ENCODE measurements at regions of chr15 and their contacts with region 1.

Region 1: GRCh38 chr15:74615508-74616365 is at the start of gene CLK3:
- DNase-seq: peak; percentile 96 to 99 (median 98)
- ATAC-seq: peak; percentile 89 to 92 (median 90)
- H3K4me3 ChIP-seq: peak within 1 kb of the TSS; percentile 84 to 98 (median 94)
- H3K27ac ChIP-seq: peak within 1 kb of the TSS; percentile 89 to 99 (median 97)
- H3K4me1 ChIP-seq: peaks cover 12 to 15% (median 13%) of the 10 kb centered on the region in 3 donors
- H3K27me3 ChIP-seq: no peaks in the 10 kb centered on the region
- CTCF ChIP-seq: no peak
- total RNA-seq, gene CLK3: 23.1 to 42.2 (median 28.7) TPM

Region 2: DNA sequence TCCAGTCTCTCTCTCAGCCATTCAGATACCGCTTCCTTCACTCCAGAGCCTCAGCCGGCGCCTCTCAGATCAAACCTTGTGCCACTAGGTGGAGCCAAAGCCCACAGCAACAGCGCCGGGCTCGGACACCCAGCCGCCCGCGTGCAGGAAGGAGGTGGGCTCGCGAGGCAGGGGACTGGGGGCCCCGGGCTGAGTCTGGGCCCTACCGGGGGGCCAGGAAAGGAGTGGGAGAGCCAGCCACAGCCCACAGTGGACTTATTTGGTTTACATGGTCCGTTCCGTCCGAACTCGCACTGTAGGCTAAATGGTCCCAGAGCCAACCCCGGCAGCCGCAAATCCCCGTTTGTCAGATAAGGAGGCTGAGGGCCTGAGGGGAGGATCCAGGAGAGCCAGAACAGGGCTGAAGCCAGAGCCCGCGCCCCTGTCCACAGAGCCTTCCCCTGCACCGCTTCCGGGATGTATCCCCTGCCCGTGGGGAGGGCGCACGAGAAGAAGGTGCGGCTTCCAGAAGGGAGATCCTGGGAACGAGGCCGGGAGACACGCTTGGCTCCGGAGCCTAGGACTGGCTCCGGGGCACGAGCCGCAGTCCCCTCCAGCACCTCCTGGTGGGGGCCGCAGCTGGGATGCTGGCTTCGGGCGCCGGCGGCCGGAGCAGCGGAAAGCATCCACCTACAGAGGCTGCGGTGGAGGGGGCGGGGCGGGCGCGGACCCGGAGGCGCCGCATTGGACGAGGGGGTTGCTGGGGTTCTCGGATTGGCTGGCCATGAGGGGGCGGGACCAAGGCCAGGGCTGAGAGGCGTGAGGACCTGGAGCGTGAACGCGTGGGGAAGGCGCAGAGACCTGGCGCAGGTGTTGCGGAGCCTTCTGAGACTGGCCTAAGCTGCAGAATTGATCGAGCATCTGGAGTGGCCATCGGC is 241.7 kb before region 1 on chr15:
- intact Hi-C with region 1: loop called in 1 of 3 experiments (anchors 10 kb)
- DNase-seq: peak; percentile 90 to 96 (median 94)
- ATAC-seq: peak; percentile 97 to 100 (median 99)
- H3K4me3 ChIP-seq: peak overlapping the region; percentile 49 to 65 (median 60)
- H3K27ac ChIP-seq: no peak overlapping the region
- H3K4me1 ChIP-seq: peaks cover 0 to 8% (median 0%) of the 10 kb centered on the region in 3 donors
- H3K27me3 ChIP-seq: no peaks in the 10 kb centered on the region
- CTCF ChIP-seq: peak; percentile 79 to 92 (median 87)

Region 3: DNA sequence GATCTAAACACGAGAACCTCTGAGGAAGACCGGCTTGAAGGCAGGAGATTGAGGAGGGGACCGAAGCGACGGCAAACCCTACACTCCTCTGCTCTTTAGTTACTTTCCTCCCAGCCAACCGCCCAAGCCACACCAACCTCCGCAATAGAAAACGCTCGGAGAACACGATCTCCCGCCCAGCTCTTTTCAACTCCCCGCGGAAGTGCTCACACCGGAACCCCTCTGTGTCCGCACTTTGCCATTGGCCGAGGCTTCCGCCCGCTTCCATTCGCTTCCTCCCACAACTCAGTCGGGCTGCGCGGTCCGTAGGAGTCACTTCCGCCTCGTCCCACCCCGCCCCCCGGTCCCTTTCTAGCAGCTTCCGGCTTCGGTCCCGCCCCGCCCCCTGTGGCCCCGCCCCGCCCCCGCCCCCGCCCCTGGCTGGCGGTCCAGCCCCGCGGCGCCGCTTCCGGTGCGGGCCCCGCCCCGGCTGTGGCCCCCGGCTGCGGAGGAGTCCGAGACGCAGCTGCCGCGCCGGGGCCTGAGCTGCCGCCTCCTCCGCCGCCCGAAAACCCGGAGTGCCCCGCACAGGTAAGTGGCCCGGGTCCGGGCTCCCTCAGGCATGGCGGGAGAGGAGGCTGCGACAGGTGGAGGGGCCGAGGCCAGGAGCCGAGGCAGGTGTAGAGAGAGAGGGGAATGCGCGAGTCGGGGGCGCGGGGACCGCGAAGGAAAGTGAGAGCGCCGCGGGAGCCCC is 74.8 kb before region 1 on chr15 and contains the start of gene ARID3B:
- intact Hi-C with region 1: loop called in 1 of 3 experiments (anchors 10 kb)
- DNase-seq: peak; percentile 92 to 99 (median 98)
- ATAC-seq: peak; percentile 95 to 98 (median 96)
- H3K4me3 ChIP-seq: peak within 1 kb of the TSS; percentile 81 to 96 (median 92)
- H3K27ac ChIP-seq: peak within 1 kb of the TSS; percentile 52 to 64 (median 63)
- H3K4me1 ChIP-seq: peaks cover 6 to 19% (median 14%) of the 10 kb centered on the region in 3 donors
- H3K27me3 ChIP-seq: no peaks in the 10 kb centered on the region
- CTCF ChIP-seq: no peak
- total RNA-seq, gene ARID3B: 2.9 to 4.5 (median 3.5) TPM

Region 4: DNA sequence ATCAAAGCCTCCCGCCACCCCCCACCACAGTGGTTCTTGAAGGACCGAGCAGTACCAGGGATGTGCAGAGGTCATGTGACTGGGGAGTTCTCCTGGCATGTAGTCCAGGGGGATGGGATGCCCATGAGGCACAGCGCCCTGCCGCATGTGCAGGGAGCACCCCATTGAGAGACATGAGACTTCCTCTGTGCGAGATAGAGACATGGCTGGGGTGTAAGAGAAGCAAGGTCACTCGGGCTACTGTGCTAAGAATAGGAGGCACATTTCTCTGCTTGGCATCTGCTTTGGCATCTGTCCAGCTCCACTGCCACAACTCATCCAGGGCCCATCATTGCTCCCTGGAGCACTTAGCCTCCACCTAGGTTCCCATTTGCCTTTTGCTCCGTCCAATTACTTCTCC is 112.0 kb after region 1 on chr15:
- intact Hi-C with region 1: no loop called
- DNase-seq: no peak
- ATAC-seq: no peak
- H3K4me3 ChIP-seq: no peak overlapping the region
- H3K27ac ChIP-seq: no peak overlapping the region
- H3K4me1 ChIP-seq: peaks cover 0 to 5% (median 0%) of the 10 kb centered on the region in 3 donors
- H3K27me3 ChIP-seq: no peaks in the 10 kb centered on the region
- CTCF ChIP-seq: no peak